ENCODE measurements at regions of chr11 and their contacts with region 1.

Region 1: GRCh38 chr11:57751676-57752253 is at the start of gene BTBD18:
- DNase-seq: no peak
- ATAC-seq: peak; percentile 89
- H3K4me3 ChIP-seq: no peak within 1 kb of the TSS
- H3K27ac ChIP-seq: no peak within 1 kb of the TSS
- H3K4me1 ChIP-seq: peaks cover 0 to 12% of the 10 kb centered on the region in 2 experiments; a peak in 1 of 4 replicates
- H3K27me3 ChIP-seq: no peaks in the 10 kb centered on the region
- CTCF ChIP-seq: peak; percentile 65 to 69 (median 68)
- POLR2A ChIP-seq: no peak
- RAD21 ChIP-seq: peak; percentile 77
- total RNA-seq, gene BTBD18: not detected

Region 2: DNA sequence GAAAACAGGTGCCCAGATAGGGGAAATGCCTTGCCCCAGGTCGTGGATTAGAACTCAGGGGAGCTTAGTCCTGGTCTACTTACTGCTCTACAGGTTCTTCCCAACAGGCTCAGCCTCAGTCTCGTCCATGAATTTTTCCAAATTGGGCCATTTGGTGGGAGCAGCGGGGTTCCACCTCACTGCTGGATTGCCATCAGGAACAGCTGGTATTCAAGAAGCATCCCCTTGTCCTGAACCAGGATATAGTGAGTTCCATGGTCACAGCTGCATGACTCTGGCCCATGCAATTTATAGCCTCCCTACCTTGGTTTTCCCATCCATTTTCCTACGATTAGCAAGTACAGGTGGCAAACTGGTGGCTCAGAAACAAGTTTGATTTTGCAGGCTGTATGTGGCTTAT is 177.7 kb before region 1 on chr11:
- CTCF ChIA-PET with region 1: no interaction called
- POLR2A ChIA-PET with region 1: no interaction called
- RAD21 ChIA-PET with region 1: no interaction called
- intact Hi-C with region 1: no loop called
- DNase-seq: no peak
- ATAC-seq: no peak
- H3K4me3 ChIP-seq: no peak overlapping the region
- H3K27ac ChIP-seq: no peak overlapping the region
- H3K4me1 ChIP-seq: no peaks in the 10 kb centered on the region
- H3K27me3 ChIP-seq: no peaks in the 10 kb centered on the region
- CTCF ChIP-seq: no peak
- POLR2A ChIP-seq: no peak
- RAD21 ChIP-seq: no peak

Region 3: GRCh38 chr11:57741132-57742086 is 10.4 kb before region 1 on chr11 and contains the start of gene SELENOH:
- CTCF ChIA-PET with region 1: interaction called, 13 read pairs
- POLR2A ChIA-PET with region 1: interaction called, 7 read pairs
- RAD21 ChIA-PET with region 1: interaction called in 1 of 2 experiments, 3 read pairs
- intact Hi-C with region 1: no loop called
- DNase-seq: peak; percentile 94
- ATAC-seq: peak; percentile 95
- H3K4me3 ChIP-seq: peak within 1 kb of the TSS; percentile 95 to 97
- H3K27ac ChIP-seq: peak within 1 kb of the TSS; percentile 76
- H3K4me1 ChIP-seq: peaks cover 0 to 17% of the 10 kb centered on the region in 2 experiments; a peak in 2 of 4 replicates
- H3K27me3 ChIP-seq: no peaks in the 10 kb centered on the region
- CTCF ChIP-seq: no peak
- POLR2A ChIP-seq: peak; percentile 62
- RAD21 ChIP-seq: no peak
- total RNA-seq, gene SELENOH: 194 TPM

Region 4: DNA sequence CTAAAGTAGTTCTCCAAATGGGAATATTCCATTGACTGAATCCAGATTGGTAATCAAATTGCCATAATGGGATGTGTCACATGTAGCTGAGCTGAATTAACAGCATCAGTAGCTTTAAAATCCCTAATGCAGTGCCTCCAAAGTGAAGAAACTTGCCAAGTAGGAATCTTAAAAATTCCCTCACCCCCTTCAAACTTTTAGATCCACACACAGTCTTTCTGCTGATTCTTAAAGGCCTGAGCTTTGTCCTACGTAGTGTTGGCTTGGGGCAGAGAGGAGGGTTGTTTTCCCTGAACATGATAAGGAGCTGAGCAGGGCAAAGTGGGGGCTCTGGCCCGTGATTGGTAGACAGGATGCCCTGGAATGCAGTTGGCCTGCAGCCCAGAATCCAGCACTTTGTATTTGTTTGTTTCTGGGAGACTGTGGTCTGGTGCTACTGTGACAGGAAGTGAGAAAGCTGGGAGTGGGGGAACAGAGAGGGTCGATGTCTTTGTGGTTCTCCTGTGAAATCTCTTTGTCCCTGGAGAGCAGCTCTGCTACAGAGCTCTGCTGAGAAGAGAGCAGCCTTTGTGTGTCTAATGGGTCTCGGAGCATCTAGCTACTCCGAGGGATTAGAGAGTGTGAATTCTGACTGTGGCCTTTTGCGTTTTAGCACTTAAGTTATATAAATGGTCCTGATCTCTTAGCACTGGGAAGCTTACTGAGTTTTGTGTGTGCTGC is 26.7 kb after region 1 on chr11:
- CTCF ChIA-PET with region 1: interaction called, 12 read pairs
- POLR2A ChIA-PET with region 1: interaction called, 3 read pairs
- RAD21 ChIA-PET with region 1: interaction called in 1 of 2 experiments, 3 read pairs
- intact Hi-C with region 1: no loop called
- DNase-seq: peak; percentile 89
- ATAC-seq: peak; percentile 81
- H3K4me3 ChIP-seq: peak overlapping the region; percentile 28 to 49
- H3K27ac ChIP-seq: peak overlapping the region; percentile 89
- H3K4me1 ChIP-seq: peaks cover 88 to 98% of the 10 kb centered on the region in 2 experiments
- H3K27me3 ChIP-seq: no peaks in the 10 kb centered on the region
- CTCF ChIP-seq: no peak
- POLR2A ChIP-seq: no peak
- RAD21 ChIP-seq: 0 out of 2 replicates have a peak, but pooled peaks have one; percentile 7

Region 5: GRCh38 chr11:58524232-58525036 is 772.7 kb after region 1 on chr11:
- CTCF ChIA-PET with region 1: no interaction called
- POLR2A ChIA-PET with region 1: no interaction called
- RAD21 ChIA-PET with region 1: no interaction called
- intact Hi-C with region 1: loop called (anchors 5 kb)
- DNase-seq: peak; percentile 71
- ATAC-seq: peak; percentile 98
- H3K4me3 ChIP-seq: peak overlapping the region in 1 of 2 experiments; percentile 2; a peak in 1 of 4 replicates
- H3K27ac ChIP-seq: no peak overlapping the region
- H3K4me1 ChIP-seq: peaks cover 0 to 8% of the 10 kb centered on the region in 2 experiments; a peak in 3 of 4 replicates
- H3K27me3 ChIP-seq: 0 out of 2 replicates have a peak, but pooled peaks cover 4% of the 10 kb centered on the region
- CTCF ChIP-seq: peak; percentile 67 to 99 (median 78)
- POLR2A ChIP-seq: no peak
- RAD21 ChIP-seq: peak; percentile 64

Region 6: DNA sequence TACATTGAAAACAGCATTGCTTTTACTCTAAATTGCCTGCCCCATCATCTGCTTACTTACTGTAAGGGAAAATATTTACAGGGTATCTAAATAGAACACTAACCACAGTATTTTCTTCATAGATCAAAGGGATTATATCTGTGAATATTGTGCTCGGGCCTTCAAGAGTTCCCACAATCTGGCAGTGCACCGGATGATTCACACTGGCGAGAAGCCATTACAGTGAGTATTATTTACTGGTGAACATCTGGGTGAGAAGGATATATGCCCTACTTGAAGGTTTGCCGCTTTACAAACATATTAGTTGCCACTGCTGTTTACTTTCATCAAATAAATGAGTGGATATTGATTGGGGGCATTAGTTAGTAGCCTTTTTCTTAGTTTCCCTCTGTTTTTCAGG is 864.8 kb after region 1 on chr11:
- CTCF ChIA-PET with region 1: no interaction called
- POLR2A ChIA-PET with region 1: no interaction called
- RAD21 ChIA-PET with region 1: no interaction called
- intact Hi-C with region 1: no loop called
- DNase-seq: no peak
- ATAC-seq: no peak
- H3K4me3 ChIP-seq: no peak overlapping the region
- H3K27ac ChIP-seq: no peak overlapping the region
- H3K4me1 ChIP-seq: no peaks in the 10 kb centered on the region
- H3K27me3 ChIP-seq: no peaks in the 10 kb centered on the region
- CTCF ChIP-seq: no peak
- POLR2A ChIP-seq: no peak
- RAD21 ChIP-seq: no peak